ENCODE measurements at regions of chr10 and their contacts with region 1.

Region 1: DNA sequence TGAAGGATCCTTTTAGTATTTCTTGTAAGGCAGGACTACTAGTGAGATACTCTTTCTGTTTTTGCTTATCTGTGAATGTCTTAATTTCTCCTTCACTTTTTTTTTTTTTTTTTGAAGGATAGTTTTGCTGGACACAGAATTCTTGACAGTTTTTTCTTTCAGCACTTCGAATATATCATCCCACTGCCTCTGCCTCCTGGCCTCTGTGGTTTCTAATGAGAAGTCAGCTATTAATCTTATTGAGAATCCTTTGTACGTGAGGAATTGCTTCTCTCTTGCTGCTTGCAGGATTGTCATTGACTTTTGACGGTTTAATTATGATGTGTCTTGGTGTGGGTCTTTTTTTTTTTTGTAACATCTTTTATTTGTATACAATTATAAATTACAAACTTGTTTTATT is 12.6 kb upstream of the WAC start:
- DNase-seq: no peak
- ATAC-seq: no peak
- H3K4me3 ChIP-seq: no peak overlapping the region
- H3K4me3 Mint-ChIP-seq: no peak overlapping the region
- H3K27ac ChIP-seq: no peak overlapping the region
- H3K27ac Mint-ChIP-seq: no peak overlapping the region
- H3K4me1 ChIP-seq: no peaks in the 10 kb centered on the region
- H3K4me1 Mint-ChIP-seq: peaks cover 0 to 9% (median 0%) of the 10 kb centered on the region in 7 donors
- H3K27me3 ChIP-seq: no peaks in the 10 kb centered on the region
- H3K27me3 Mint-ChIP-seq: peaks cover 0 to 12% (median 0%) of the 10 kb centered on the region in 5 donors

Region 2: DNA sequence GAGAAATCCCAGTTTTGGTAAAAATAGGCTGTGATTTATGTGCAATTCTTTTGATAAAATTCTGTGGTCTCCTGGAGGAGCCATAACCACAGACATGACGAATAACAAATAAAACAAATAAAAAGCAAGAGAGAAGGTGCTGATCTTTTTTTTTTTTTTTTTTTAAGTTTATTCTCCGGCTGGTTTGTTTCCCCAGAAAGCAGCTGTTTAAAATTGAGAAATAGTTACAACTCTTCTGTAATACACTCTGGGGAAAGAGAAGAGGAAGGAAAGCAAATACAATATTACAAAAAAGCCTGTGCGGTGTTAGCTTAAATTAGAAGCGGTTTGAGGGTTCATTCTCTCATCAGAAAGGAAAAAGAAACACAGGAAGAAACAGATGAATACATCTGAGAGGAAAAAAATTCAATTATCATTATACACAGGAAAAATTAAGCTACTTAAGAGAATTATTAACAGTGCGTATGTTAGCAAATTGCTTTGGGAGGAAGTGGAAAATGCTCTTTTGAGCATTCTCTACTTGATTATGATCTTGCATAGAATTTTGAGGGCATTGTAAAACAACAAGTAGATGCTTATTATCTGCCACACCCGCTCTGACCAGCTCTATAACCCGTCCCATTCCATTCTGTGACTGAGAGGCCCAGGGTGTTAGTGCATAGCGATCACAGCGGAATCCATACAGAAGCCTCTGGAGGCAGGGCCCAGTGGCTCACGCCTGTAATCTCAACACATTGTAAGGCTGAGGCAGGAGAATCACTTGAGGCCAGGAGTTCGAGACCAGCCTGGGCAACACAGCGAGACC is 28.0 kb before region 1 on chr10:
- CTCF ChIA-PET with region 1: no interaction called
- POLR2A ChIA-PET with region 1: no interaction called
- intact Hi-C with region 1: loop called in 1 of 2 experiments (anchors 2 kb)
- DNase-seq: no peak
- ATAC-seq: peak; percentile 54
- H3K4me3 ChIP-seq: no peak overlapping the region
- H3K4me3 Mint-ChIP-seq: no peak overlapping the region
- H3K27ac ChIP-seq: no peak overlapping the region
- H3K27ac Mint-ChIP-seq: no peak overlapping the region
- H3K4me1 ChIP-seq: no peaks in the 10 kb centered on the region
- H3K4me1 Mint-ChIP-seq: peaks cover 0 to 12% (median 5%) of the 10 kb centered on the region in 7 donors
- H3K27me3 ChIP-seq: no peaks in the 10 kb centered on the region
- H3K27me3 Mint-ChIP-seq: peaks cover 6 to 15% (median 10%) of the 10 kb centered on the region in 5 donors

Region 3: GRCh38 chr10:28551086-28551485 is 30.7 kb after region 1 on chr10:
- CTCF ChIA-PET with region 1: no interaction called
- POLR2A ChIA-PET with region 1: no interaction called
- intact Hi-C with region 1: no loop called
- DNase-seq: no peak
- ATAC-seq: no peak
- H3K4me3 ChIP-seq: no peak overlapping the region
- H3K4me3 Mint-ChIP-seq: peak overlapping the region in 8 of 10 donors; percentile 22 to 71 (median 50)
- H3K27ac ChIP-seq: no peak overlapping the region
- H3K27ac Mint-ChIP-seq: peak overlapping the region in 7 of 9 donors; percentile 6 to 85 (median 35)
- H3K4me1 ChIP-seq: peaks cover 47 to 48% of the 10 kb centered on the region in 2 donors
- H3K4me1 Mint-ChIP-seq: peaks cover 63 to 92% (median 85%) of the 10 kb centered on the region in 7 donors
- H3K27me3 ChIP-seq: no peaks in the 10 kb centered on the region
- H3K27me3 Mint-ChIP-seq: no peaks in the 10 kb centered on the region

Measured in naive thymus-derived CD4-positive, alpha-beta T cell (primary cell).